ENCODE measurements at regions of chr6 and their contacts with region 1.

Region 1: GRCh38 chr6:45421709-45422502 is 44.2 kb upstream of the SUPT3H start:
- DNase-seq: peak in 13 of 14 experiments; percentile 19 to 77 (median 42)
- ATAC-seq: peak; percentile 41
- H3K4me3 ChIP-seq: peak overlapping the region; percentile 94
- H3K4me3 Mint-ChIP-seq: peak overlapping the region; percentile 98
- H3K27ac ChIP-seq: peak overlapping the region; percentile 34 to 50
- H3K27ac Mint-ChIP-seq: peak overlapping the region; percentile 85
- H3K4me1 ChIP-seq: peaks cover 49% of the 10 kb centered on the region
- H3K4me1 Mint-ChIP-seq: peaks cover 39% of the 10 kb centered on the region
- H3K27me3 ChIP-seq: peaks cover 18 to 31% of the 10 kb centered on the region in 2 experiments
- H3K27me3 Mint-ChIP-seq: peaks cover 38% of the 10 kb centered on the region
- CTCF ChIP-seq: no peak

Region 2: GRCh38 chr6:44475779-44476434 is 946.0 kb before region 1 on chr6:
- CTCF ChIA-PET with region 1: no interaction called
- POLR2A ChIA-PET with region 1: no interaction called
- intact Hi-C with region 1: loop called in 1 of 2 experiments (anchors 10 kb)
- DNase-seq: peak; percentile 41 to 80 (median 62)
- ATAC-seq: peak; percentile 89
- H3K4me3 ChIP-seq: no peak overlapping the region
- H3K4me3 Mint-ChIP-seq: no peak overlapping the region
- H3K27ac ChIP-seq: no peak overlapping the region
- H3K27ac Mint-ChIP-seq: no peak overlapping the region
- H3K4me1 ChIP-seq: peaks cover 9% of the 10 kb centered on the region
- H3K4me1 Mint-ChIP-seq: peaks cover 5% of the 10 kb centered on the region
- H3K27me3 ChIP-seq: peaks cover 0 to 5% of the 10 kb centered on the region in 2 experiments
- H3K27me3 Mint-ChIP-seq: no peaks in the 10 kb centered on the region
- CTCF ChIP-seq: peak; percentile 85

Region 3: DNA sequence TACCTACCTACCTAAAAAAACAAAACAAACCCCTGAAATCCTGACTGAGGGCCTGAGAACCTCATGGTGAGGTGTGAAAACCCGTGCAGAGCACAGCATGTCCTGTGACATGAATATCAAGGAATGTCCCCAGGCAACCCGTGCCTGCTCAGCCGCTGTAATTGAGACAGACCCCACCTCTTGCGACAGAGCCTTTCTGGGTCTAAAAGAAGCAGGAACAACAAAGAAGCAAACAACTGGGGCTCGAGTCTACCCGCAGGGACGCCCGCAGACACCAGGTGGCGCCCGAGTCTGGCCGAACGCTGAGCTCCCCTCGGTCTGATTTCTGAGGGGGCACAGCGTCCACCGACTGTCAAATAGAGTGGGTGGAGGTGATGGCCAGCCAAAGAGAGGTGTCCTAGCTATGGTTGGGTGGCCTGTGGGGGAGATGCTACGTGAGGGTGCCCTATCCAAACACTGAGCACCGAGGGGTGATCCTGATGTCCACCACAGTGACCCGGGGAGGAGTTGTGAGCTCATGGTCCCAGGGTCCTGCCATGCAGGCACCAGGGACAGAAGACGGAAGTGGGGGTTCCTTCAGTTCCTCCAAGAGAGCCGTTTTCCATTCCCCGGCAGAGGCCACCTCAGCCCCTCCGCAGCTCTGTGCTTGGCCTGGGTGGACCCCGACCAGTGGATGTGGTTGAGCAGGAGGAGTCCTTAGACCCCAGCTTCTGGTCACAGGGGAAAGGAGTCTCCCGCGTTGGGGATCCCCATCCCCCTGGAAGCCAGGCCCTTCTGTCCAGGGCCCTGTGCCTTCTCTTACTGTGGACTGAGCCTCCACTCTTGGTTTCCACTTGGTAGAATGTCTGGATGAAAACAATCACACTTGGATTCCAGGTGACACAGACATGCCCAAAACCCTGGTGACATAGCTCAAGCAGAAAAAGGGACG is 766.2 kb before region 1 on chr6:
- CTCF ChIA-PET with region 1: interaction called, 10 read pairs
- POLR2A ChIA-PET with region 1: interaction called, 9 read pairs
- intact Hi-C with region 1: loop called (anchors 1 to 2 kb)
- DNase-seq: peak; percentile 51 to 82 (median 64)
- ATAC-seq: peak; percentile 79
- H3K4me3 ChIP-seq: no peak overlapping the region
- H3K4me3 Mint-ChIP-seq: no peak overlapping the region
- H3K27ac ChIP-seq: no peak overlapping the region
- H3K27ac Mint-ChIP-seq: peak overlapping the region; percentile 51
- H3K4me1 ChIP-seq: peaks cover 10% of the 10 kb centered on the region
- H3K4me1 Mint-ChIP-seq: peaks cover 8% of the 10 kb centered on the region
- H3K27me3 ChIP-seq: peaks cover 0 to 3% of the 10 kb centered on the region in 2 experiments
- H3K27me3 Mint-ChIP-seq: peaks cover 3% of the 10 kb centered on the region
- CTCF ChIP-seq: peak; percentile 95

Region 4: GRCh38 chr6:44932651-44933091 is 489.2 kb before region 1 on chr6:
- CTCF ChIA-PET with region 1: no interaction called
- POLR2A ChIA-PET with region 1: interaction called, 4 read pairs
- intact Hi-C with region 1: loop called (anchors 5 to 10 kb)
- DNase-seq: peak; percentile 4 to 86 (median 40)
- ATAC-seq: peak; percentile 77
- H3K4me3 ChIP-seq: peak overlapping the region; percentile 42
- H3K4me3 Mint-ChIP-seq: peak overlapping the region; percentile 89
- H3K27ac ChIP-seq: peak overlapping the region; percentile 63 to 64
- H3K27ac Mint-ChIP-seq: peak overlapping the region; percentile 95
- H3K4me1 ChIP-seq: peaks cover 19% of the 10 kb centered on the region
- H3K4me1 Mint-ChIP-seq: peaks cover 65% of the 10 kb centered on the region
- H3K27me3 ChIP-seq: no peaks in the 10 kb centered on the region
- H3K27me3 Mint-ChIP-seq: no peaks in the 10 kb centered on the region
- CTCF ChIP-seq: no peak

Region 5: GRCh38 chr6:45054610-45055009 is 367.3 kb before region 1 on chr6:
- CTCF ChIA-PET with region 1: no interaction called
- POLR2A ChIA-PET with region 1: no interaction called
- intact Hi-C with region 1: no loop called
- DNase-seq: peak in 2 of 14 experiments; percentile 5 to 23
- ATAC-seq: no peak
- H3K4me3 ChIP-seq: no peak overlapping the region
- H3K4me3 Mint-ChIP-seq: no peak overlapping the region
- H3K27ac ChIP-seq: no peak overlapping the region
- H3K27ac Mint-ChIP-seq: no peak overlapping the region
- H3K4me1 ChIP-seq: no peaks in the 10 kb centered on the region
- H3K4me1 Mint-ChIP-seq: peaks cover 35% of the 10 kb centered on the region
- H3K27me3 ChIP-seq: no peaks in the 10 kb centered on the region
- H3K27me3 Mint-ChIP-seq: no peaks in the 10 kb centered on the region
- CTCF ChIP-seq: no peak

Region 6: GRCh38 chr6:45297320-45297719 is 124.6 kb before region 1 on chr6:
- CTCF ChIA-PET with region 1: no interaction called
- POLR2A ChIA-PET with region 1: interaction called, 3 read pairs
- intact Hi-C with region 1: loop called in 1 of 2 experiments (anchors 5 kb)
- DNase-seq: no peak
- ATAC-seq: no peak
- H3K4me3 ChIP-seq: no peak overlapping the region
- H3K4me3 Mint-ChIP-seq: no peak overlapping the region
- H3K27ac ChIP-seq: no peak overlapping the region
- H3K27ac Mint-ChIP-seq: peak overlapping the region; percentile 14
- H3K4me1 ChIP-seq: no peaks in the 10 kb centered on the region
- H3K4me1 Mint-ChIP-seq: peaks cover 53% of the 10 kb centered on the region
- H3K27me3 ChIP-seq: no peaks in the 10 kb centered on the region
- H3K27me3 Mint-ChIP-seq: no peaks in the 10 kb centered on the region
- CTCF ChIP-seq: peak; percentile 44

Region 7: DNA sequence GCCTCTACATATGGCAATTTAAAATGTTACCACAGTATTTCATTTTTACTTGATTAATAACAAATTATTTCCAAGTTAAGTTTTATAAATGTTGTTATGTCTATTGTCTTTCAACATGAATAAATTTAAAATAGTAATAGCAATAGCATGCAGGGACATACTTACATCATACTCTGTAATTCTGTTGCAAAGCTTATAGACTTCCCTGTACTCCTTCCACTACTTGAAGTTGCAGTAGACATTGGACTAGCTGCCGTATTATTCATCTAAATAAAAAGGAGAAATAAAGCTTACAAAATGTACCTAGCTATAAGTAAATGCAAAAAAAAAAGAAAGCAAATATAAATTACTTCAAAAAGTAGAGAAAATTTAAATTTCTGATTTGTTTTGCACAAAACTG is 56.9 kb before region 1 on chr6:
- CTCF ChIA-PET with region 1: no interaction called
- POLR2A ChIA-PET with region 1: no interaction called
- intact Hi-C with region 1: no loop called
- DNase-seq: no peak
- ATAC-seq: no peak
- H3K4me3 ChIP-seq: no peak overlapping the region
- H3K4me3 Mint-ChIP-seq: no peak overlapping the region
- H3K27ac ChIP-seq: no peak overlapping the region
- H3K27ac Mint-ChIP-seq: no peak overlapping the region
- H3K4me1 ChIP-seq: no peaks in the 10 kb centered on the region
- H3K4me1 Mint-ChIP-seq: peaks cover 11% of the 10 kb centered on the region
- H3K27me3 ChIP-seq: no peaks in the 10 kb centered on the region
- H3K27me3 Mint-ChIP-seq: no peaks in the 10 kb centered on the region
- CTCF ChIP-seq: no peak

Region 8: DNA sequence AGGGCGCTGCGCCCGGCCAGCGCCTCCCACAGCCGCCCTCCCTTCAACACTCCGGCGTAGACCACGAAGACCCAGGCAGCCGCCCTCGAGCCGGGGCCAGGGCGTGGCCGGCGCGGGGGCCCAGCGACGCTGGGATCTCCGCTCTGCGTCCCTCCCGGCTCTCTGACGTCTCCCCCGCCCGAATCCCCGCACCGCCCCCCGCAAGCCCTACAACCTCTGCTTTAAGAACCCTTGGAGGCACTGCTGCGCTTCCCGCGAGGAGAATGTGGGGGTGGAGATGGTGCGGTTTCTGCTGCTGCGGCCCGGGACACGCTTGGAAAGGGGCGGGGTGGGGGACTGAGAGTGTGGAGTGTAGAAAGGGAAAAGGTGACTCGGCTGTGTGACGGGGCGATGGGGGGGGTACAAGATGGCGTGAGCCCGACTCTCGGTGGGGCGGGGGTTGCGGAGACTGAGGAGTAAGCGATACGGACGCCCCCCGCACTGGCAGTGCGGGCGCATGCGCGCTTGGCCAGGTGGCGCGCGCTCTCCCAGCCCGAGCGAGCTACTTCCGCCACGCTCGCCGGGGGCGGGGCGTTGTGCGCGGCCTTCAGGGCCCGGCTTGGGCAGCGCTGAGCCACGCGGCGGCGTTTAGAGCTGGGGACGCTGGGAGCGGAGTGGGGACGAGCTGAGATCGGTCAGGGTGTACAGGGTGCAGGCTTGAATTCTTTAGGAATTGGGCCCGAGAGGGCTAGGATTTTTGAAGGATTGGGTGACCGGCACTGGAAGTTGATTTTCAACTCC is 44.2 kb before region 1 on chr6 and contains the start of gene SUPT3H:
- CTCF ChIA-PET with region 1: interaction called, 8 read pairs
- POLR2A ChIA-PET with region 1: interaction called, 22 read pairs
- intact Hi-C with region 1: loop called (anchors 1 to 2 kb)
- DNase-seq: peak; percentile 74 to 98 (median 86)
- ATAC-seq: peak; percentile 80
- H3K4me3 ChIP-seq: peak within 1 kb of the TSS; percentile 85
- H3K4me3 Mint-ChIP-seq: peak within 1 kb of the TSS; percentile 100
- H3K27ac ChIP-seq: peak within 1 kb of the TSS; percentile 91 to 93
- H3K27ac Mint-ChIP-seq: peak within 1 kb of the TSS; percentile 99
- H3K4me1 ChIP-seq: peaks cover 8% of the 10 kb centered on the region
- H3K4me1 Mint-ChIP-seq: peaks cover 31% of the 10 kb centered on the region
- H3K27me3 ChIP-seq: no peaks in the 10 kb centered on the region
- H3K27me3 Mint-ChIP-seq: no peaks in the 10 kb centered on the region
- CTCF ChIP-seq: no peak
- total RNA-seq, gene SUPT3H: 8.9 to 10.5 TPM

Region 9: DNA sequence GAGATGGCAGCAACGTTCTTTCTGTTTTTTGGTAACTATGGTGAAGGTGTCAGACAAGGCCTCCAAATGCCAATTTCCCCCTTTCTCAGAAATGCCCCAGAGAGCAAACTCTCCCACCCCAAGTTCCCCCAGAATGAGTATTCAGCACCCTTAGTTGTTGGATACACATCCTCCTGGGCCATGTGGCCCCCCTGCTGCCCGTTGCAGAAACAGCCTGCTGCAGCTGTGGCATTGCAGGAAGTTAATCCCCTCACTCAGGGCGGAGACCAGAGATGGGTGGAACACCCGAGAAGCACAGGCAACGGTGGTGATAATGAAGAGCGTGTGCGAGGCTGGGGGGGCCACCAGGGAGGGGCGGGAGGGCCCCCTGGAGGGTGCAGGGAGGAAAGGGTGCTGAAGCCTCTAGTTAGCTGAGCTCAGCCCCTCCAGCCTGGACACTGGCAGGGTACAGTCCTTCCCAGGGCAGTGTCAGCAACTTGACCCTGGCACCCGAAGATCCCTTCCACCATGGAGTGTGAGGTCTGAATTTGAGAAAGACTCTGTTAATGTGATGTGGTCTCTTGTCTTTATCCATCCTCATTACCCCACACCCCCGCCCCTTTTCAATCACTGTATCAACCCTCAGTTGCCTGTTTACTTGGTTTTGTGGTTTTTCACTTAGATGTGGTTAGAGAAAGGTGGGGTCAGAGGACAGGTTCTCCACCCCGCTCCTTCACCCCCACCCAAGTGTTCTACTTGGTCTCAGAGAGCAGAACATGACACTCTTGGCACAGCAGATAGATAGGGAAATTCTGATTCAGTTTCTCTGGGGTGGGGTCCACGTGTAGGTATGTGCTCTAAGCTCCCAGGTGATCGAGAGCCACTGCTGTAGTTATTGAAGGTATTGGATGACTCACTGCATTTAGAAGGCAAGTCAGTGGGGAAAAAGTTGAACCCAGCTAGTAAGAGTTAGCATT is 164.6 kb after region 1 on chr6:
- CTCF ChIA-PET with region 1: interaction called, 3 read pairs
- POLR2A ChIA-PET with region 1: interaction called, 4 read pairs
- intact Hi-C with region 1: loop called (anchors 5 kb)
- DNase-seq: peak; percentile 31 to 96 (median 54)
- ATAC-seq: peak; percentile 81
- H3K4me3 ChIP-seq: peak overlapping the region; percentile 24
- H3K4me3 Mint-ChIP-seq: peak overlapping the region; percentile 84
- H3K27ac ChIP-seq: peak overlapping the region in 1 of 2 donors; percentile 16
- H3K27ac Mint-ChIP-seq: peak overlapping the region; percentile 79
- H3K4me1 ChIP-seq: peaks cover 59% of the 10 kb centered on the region
- H3K4me1 Mint-ChIP-seq: peaks cover 70% of the 10 kb centered on the region
- H3K27me3 ChIP-seq: no peaks in the 10 kb centered on the region
- H3K27me3 Mint-ChIP-seq: no peaks in the 10 kb centered on the region
- CTCF ChIP-seq: peak; percentile 25